HEK293T (cell line): ENCODE measurements at regions of chr7 and their contacts with region 1.

Region 1: GRCh38 chr7:51162724-51163329 is 153.8 kb downstream of the COBL start:
- DNase-seq: peak; percentile 63

Region 2: GRCh38 chr7:50092579-50093491 is 1070.0 kb before region 1 on chr7 and contains the start of gene ZPBP:
- CTCF ChIA-PET with region 1: interaction called, 12 read pairs
- POLR2A ChIA-PET with region 1: no interaction called
- DNase-seq: peak; percentile 17

Region 3: GRCh38 chr7:51067757-51068156 is 95.1 kb before region 1 on chr7:
- CTCF ChIA-PET with region 1: no interaction called
- POLR2A ChIA-PET with region 1: no interaction called
- DNase-seq: peak; percentile 51

Region 4: DNA sequence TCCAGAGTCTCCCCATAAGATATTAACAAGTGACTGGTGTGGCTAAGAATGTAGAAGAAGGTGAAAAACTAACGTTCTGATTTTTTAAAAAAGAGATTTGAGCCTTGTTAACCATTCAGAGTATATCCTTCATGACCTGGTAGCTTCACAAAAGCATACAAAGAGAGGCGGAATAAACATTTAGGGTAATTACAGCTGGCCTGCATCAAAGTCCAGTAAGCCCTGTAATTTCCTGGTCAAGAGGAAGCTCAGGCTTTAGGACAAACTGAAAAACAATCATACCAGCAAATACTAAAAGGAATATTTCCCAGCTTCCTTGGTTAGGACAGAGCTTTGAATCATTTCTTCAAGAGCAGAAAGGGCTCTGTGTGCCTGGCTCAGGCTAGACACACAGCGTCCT is 11.4 kb before region 1 on chr7:
- CTCF ChIA-PET with region 1: interaction called, 18 read pairs
- POLR2A ChIA-PET with region 1: no interaction called
- DNase-seq: no peak

Region 5: DNA sequence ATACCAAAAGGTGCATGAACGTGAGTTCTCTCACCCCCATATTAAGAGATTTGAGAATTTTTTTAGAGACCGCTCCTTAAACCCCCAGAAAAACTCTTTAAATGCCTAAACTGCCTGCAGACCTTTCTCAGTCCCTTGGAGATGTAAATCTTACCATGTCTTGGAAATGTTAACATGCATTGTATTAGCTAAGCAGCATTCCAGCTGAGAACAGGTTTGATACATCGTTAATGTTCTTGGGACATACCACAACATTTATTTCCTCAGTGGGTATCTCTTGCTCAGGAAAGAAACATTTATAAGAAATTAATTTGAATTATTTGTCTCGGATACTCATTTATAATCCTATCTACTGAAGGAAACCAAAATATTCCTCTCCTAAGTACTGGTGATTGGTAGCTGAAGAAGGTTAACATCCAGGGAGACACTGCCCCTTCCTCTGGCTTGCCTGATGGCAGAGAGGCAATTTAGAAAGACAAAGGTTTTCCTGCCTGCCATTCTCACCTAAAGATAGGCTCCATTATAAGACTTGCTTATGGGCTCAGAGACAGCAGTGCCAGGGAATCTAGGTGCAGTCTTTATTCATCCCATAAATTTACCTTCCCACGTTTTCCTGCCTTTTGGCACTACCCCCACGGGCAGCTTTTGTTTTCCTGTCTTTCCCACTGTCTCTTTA is 12.6 kb after region 1 on chr7:
- CTCF ChIA-PET with region 1: interaction called, 12 read pairs
- POLR2A ChIA-PET with region 1: no interaction called
- DNase-seq: no peak

Region 6: DNA sequence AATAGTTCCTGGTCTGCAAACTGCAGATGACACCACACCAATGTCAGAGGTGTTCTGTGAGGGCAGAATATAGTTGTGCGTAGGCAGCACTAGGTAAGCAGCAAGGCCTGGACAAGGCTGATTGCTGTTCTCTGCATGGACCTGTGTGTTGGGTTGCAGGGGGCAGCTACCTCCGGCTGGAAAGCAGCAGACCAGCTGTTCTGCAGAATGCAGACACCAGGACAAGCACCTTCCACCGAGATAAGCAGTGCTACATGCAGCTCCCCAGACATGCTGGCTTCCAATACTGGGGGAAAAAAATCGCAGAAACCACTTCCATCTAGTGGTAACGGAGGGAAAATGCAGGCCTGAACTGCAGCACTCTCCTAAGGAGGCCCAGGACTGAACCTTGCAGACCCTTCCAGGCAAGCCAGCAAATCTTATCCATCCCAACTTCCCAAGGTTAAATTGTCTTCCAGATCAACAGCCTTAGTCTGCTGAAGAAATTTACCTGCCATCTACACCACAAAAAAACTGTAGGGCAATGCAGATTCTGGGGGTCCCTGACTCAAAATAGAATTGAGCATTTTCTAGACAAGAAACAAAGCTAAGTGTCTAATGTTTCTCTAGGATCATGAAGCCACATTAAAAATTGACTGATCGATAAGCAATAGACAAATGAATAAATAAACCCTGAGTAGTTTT is 204.2 kb after region 1 on chr7:
- CTCF ChIA-PET with region 1: interaction called, 62 read pairs
- POLR2A ChIA-PET with region 1: no interaction called
- DNase-seq: peak; percentile 80

Region 7: DNA sequence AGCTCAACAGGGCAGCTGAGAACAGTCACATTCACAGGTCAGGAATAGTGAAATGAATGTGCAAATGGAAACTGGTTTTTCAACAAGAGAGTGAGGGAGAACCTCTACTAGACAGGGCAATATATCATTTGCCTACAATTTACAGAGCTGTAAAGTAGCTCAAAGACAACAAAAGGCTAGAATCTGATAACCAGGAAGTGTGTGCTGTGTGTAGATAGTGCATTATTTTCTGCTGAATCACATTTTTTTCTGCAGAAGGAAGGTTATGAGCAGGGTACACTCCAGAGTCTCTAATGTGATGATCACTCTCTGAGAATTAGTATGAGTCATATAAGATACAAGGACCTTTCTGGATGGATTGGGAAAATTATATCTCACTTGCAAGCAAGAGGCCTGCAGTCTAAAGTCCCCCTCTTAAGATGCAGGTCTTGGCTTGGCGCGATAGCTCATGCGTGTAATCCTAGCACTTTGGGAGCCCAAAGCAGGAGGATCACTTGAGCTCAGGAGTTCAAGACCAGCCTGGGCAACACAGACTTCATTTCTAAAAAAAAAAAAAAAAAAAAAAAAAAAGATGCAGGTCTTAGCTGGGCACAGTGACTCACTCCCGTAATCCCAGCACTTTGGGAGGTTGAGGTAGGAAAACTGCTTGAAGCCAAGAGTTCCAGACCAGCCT is 213.7 kb after region 1 on chr7:
- CTCF ChIA-PET with region 1: interaction called, 12 read pairs
- POLR2A ChIA-PET with region 1: no interaction called
- DNase-seq: no peak

Region 8: GRCh38 chr7:51428217-51428887 is 265.5 kb after region 1 on chr7:
- CTCF ChIA-PET with region 1: interaction called, 13 read pairs
- POLR2A ChIA-PET with region 1: no interaction called
- DNase-seq: no peak